Colonic mucosa (tissue), 4 donors: ENCODE measurements at regions of chr9 and their contacts with region 1.

Region 1: DNA sequence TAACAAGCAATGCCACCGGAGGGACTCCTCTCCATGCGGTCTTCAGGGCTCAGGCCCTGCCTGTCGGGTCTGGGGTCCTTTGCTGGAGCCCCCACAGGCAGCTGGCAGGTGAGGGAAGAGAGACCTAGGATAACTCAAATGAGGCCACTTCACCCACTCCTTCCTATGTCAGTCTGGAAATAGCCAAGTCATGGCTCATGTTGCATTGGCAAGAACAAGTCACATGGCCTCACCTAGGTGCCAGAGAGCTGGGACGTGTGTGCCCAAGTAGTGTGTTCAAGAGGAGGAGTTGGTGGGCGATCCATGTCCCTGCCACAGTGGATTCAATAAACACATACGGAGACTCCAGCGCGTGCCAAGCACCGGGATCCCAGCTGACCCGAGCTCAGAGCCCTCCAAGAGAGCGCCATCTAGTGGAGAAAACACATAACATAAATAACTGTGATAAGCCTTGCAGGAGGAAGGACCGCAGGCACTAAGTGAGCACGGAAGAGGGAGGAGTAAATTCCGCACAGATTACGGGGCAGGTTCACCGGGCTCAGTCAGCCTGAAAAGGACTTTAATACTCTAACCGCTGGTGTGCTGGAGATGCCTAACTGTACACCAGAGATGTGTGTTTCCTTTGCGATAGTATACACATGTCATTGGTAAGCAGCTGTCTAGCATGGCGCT is 580.8 kb downstream of the CCDC171 start:
- DNase-seq: peak; percentile 40
- H3K4me3 ChIP-seq: no peak overlapping the region
- H3K27ac ChIP-seq: no peak overlapping the region
- H3K4me1 ChIP-seq: no peaks in the 10 kb centered on the region
- H3K27me3 ChIP-seq: no peaks in the 10 kb centered on the region
- CTCF ChIP-seq: peak; percentile 35

Region 2: DNA sequence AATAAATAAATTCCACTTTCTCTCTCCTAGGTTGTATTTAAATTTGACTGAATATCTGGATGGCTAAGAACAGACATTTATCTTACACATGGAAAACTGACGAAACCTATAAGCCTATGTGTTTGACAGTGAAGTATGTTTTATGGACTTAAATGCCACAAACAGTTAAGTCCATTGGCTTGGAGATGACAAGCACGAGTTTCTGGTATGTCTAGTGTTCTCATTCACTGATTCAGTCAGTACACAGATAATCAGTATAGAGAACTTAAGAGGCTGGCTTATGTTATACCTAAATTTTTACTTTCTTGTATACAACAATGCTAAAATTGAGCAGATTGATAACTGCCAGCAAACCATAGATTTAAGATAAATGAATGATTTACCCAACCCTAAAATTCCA is 672.1 kb before region 1 on chr9:
- intact Hi-C with region 1: no loop called
- DNase-seq: no peak
- H3K4me3 ChIP-seq: no peak overlapping the region
- H3K27ac ChIP-seq: no peak overlapping the region
- H3K4me1 ChIP-seq: no peaks in the 10 kb centered on the region
- H3K27me3 ChIP-seq: no peaks in the 10 kb centered on the region
- CTCF ChIP-seq: no peak

Region 3: DNA sequence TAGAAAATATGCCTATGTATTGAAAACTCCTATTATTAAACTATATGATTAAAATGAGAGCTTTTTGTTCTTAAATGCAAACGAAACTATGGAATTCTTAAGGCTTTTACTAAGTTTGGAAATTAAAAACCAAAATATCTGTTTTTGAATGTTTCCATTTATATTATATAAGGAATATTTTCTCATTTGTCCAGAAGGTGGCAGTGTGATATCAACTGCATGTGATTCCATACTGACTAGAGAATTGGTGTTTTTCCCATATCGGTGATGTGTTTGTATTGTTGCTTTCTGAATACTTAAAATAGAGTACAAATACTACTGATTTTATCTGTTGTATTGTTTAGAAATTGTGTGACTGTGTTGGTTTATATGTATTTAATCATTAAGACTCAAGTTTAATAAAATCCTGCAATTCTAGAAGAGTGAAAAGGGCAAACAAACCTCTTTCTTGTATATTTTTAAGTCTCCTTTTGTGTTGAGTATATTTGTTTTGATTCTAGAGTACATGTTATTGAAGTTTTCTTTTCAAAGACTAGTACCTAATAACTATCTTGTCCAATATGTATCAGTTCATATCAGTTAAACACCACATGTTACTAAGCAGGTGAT is 260.0 kb before region 1 on chr9:
- intact Hi-C with region 1: loop called (anchors 10 kb)
- DNase-seq: no peak
- H3K4me3 ChIP-seq: no peak overlapping the region
- H3K27ac ChIP-seq: no peak overlapping the region
- H3K4me1 ChIP-seq: no peaks in the 10 kb centered on the region
- H3K27me3 ChIP-seq: no peaks in the 10 kb centered on the region
- CTCF ChIP-seq: peak; percentile 51

Region 4: GRCh38 chr9:16030513-16031185 is 103.0 kb before region 1 on chr9:
- intact Hi-C with region 1: no loop called
- DNase-seq: no peak
- H3K4me3 ChIP-seq: no peak overlapping the region
- H3K27ac ChIP-seq: no peak overlapping the region
- H3K4me1 ChIP-seq: no peaks in the 10 kb centered on the region
- H3K27me3 ChIP-seq: no peaks in the 10 kb centered on the region
- CTCF ChIP-seq: no peak